AG04449 (cell line): ENCODE measurements at regions of chr9 and their contacts with region 1.

Region 1: GRCh38 chr9:70947086-70947485 is 174.3 kb downstream of the TRPM3 start:
- DNase-seq: no peak
- H3K4me3 ChIP-seq: no peak overlapping the region
- CTCF ChIP-seq: no peak

Region 2: DNA sequence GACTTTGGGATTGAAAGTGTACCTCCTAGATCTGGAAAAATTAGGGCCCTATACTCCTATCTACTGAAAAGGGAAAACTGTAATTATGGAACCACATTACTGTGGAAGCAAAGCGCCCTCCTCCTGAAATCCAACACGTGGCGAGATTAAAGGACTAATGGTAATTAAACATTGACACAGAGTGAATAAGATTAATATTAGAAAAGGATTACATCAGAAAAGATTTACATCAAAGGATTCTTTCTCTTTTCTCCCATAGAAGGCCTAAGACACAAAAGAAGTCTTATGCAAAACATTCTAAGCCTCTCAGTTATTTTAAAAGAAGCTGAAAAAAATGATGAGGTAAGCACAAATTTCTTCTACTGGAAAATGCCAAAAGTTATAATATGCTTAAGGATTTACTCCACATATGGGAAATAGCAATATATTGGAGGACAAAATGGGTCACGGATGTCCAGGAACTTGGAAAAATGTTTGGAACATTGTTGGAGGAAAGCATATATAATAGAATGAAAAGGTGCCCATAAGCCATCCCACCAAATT is 53.4 kb before region 1 on chr9:
- CTCF ChIA-PET with region 1: no interaction called
- POLR2A ChIA-PET with region 1: no interaction called
- DNase-seq: no peak
- H3K4me3 ChIP-seq: no peak overlapping the region
- CTCF ChIP-seq: no peak

Region 3: GRCh38 chr9:70935856-70936255 is 11.2 kb before region 1 on chr9:
- CTCF ChIA-PET with region 1: interaction called, 13 read pairs
- POLR2A ChIA-PET with region 1: no interaction called
- DNase-seq: peak; percentile 55
- H3K4me3 ChIP-seq: no peak overlapping the region
- CTCF ChIP-seq: no peak

Region 4: GRCh38 chr9:71036501-71036900 is 89.4 kb after region 1 on chr9:
- CTCF ChIA-PET with region 1: no interaction called
- POLR2A ChIA-PET with region 1: no interaction called
- DNase-seq: no peak
- H3K4me3 ChIP-seq: no peak overlapping the region
- CTCF ChIP-seq: no peak

Region 5: DNA sequence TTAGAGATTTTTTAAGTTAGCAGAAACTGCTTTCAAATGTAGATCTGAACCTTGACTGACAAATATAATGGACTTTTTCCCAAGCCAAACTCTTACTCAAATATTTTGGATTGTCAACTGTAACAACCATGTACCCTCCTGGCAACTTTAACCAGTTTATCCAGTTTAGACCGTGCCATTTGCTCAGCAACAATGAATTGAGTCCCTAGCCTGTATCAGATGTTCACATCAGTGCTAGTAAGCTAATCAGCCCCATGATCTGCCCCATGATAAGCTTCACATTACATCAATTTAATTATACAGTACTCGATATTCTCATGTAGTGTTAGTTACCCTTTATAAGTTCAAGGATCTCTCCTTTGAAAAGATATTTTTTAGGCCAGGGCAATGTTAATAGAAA is 450.8 kb after region 1 on chr9:
- CTCF ChIA-PET with region 1: no interaction called
- POLR2A ChIA-PET with region 1: no interaction called
- DNase-seq: no peak
- H3K4me3 ChIP-seq: no peak overlapping the region
- CTCF ChIP-seq: no peak